ENCODE measurements at regions of chr1 and their contacts with region 1.

Region 1: GRCh38 chr1:90959352-90960206 is 62.3 kb downstream of the ZNF644 start:
- DNase-seq: no peak
- H3K4me3 ChIP-seq: no peak overlapping the region
- H3K27ac ChIP-seq: no peak overlapping the region
- H3K4me1 ChIP-seq: peaks cover 0 to 21% (median 5%) of the 10 kb centered on the region in 4 donors
- H3K27me3 ChIP-seq: no peaks in the 10 kb centered on the region
- CTCF ChIP-seq: no peak
- EP300 ChIP-seq: no peak
- POLR2A ChIP-seq: no peak

Region 2: DNA sequence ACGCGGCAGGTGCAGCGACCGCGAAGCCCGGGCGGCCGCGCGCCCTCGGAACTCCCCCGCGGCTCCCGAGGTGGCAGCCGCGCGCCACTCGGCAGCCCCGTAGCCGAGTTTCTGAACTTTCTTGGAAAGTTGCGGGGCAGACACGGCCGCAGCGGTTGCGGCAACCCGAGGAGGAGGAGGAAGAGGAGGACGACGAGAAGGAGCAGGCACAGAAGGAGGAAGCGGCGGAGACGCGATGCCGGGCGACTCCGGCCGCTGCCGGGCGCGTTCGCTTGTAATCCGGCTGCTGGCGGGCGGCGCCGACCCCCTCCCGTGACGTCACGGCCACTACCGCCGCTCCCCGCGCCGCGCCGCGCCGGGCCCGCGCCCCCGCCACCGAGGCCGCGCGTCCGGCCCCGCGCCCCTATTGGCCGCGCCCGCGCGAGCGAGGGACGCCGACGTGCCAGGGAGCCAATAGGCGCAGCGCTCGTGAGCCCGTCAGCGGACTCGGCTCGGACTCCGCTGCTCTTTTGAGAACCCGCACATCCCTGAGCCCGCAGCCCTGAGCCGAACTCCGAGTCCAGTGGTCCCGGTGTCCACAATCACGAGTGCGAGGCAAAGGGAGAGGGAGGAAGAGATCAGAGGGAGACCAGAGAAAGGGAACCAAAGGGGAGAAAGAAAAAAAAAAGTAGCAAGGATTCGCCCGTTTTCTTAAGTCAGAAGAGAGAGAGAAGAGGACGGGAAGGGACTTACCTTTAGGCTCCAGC is 241.7 kb before region 1 on chr1:
- intact Hi-C with region 1: loop called (anchors 10 kb)
- DNase-seq: peak; percentile 78
- H3K4me3 ChIP-seq: peak overlapping the region; percentile 41 to 48 (median 45)
- H3K27ac ChIP-seq: no peak overlapping the region
- H3K4me1 ChIP-seq: peaks cover 26 to 56% (median 41%) of the 10 kb centered on the region in 4 donors
- H3K27me3 ChIP-seq: peaks cover 14 to 100% (median 86%) of the 10 kb centered on the region in 4 donors
- CTCF ChIP-seq: no peak
- EP300 ChIP-seq: no peak
- POLR2A ChIP-seq: no peak